ENCODE measurements at regions of chr14 and their contacts with region 1.

Region 1: GRCh38 chr14:102795060-102795925 is 18.0 kb downstream of the TRAF3 start:
- DNase-seq: no peak

Region 2: GRCh38 chr14:102893452-102893851 is 98.2 kb after region 1 on chr14:
- intact Hi-C with region 1: loop called (anchors 10 kb)
- DNase-seq: peak in 2 of 10 donors; percentile 17 to 70

Region 3: GRCh38 chr14:103014466-103015319 is 219.4 kb after region 1 on chr14:
- intact Hi-C with region 1: no loop called
- DNase-seq: peak in 1 of 10 donors; percentile 65

Region 4: DNA sequence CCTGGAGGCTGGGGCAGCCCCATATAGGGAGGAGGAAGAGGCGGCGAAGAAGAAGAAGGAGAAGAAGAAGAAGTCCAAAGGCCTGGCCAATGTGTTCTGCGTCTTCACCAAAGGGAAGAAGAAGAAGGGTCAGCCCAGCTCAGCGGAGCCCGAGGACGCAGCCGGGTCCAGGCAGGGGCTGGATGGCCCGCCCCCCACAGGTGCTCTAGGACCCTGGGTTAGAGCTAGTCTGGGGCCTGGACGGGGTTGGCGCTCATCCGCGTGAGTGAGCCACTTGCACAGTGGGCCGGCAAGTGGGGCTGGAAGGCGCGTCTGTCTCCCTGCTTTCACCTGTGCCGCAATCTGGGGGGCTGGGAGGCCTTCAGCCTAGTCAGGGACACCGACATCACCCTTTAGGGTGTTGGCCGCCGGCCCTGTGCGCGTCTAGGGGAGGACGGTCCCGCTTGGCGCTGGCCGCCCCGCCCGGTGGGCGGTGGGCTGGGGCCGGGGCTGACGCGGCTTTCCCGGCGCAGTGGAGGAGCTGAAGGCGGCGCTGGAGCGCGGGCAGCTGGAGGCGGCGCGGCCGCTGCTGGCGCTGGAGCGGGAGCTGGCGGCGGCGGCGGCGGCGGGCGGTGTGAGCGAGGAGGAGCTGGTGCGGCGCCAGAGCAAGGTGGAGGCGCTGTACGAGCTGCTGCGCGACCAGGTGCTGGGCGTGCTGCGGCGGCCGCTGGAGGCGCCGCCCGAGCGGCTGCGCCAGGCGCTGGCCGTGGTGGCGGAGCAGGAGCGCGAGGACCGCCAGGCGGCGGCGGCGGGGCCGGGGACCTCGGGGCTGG is 331.4 kb after region 1 on chr14:
- intact Hi-C with region 1: no loop called
- DNase-seq: peak in 6 of 10 donors; percentile 39 to 92 (median 61)

Measured in posterior cingulate gyrus (tissue), 11 donors.